ENCODE measurements at regions of chr2 and their contacts with region 1.

Region 1: DNA sequence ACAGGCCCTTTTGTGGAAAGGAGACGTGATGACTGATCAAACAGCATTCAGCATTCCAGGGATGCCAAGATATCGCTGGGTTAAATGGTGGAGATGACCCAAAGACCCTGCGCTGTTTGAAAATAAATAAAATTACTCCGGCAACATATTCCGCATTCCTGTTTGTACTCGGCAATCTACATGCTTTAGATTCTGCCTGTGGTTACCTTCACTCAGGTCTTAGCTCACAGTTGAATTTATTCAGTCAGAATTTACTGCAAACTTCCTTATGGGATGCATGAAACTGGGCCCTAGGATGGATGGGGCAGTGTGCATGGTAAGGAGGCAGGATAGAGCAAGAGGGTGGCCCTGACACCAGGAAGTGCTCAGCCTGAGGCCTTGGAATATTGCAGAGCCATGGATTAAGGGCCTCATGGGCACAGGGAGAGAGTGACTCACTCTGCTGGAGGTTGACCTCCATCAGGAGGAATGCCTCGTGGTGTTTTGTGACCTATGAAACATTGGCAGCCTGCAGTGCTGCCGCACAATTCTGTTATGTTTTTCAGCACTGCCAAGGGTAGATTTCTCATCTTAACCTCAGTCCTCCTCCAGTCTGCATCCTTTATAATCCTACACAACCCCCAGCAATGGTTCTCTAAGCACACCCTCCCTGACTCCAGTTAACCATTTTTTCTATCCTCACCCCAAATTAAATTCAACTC is 321.4 kb downstream of the IRS1 start:
- DNase-seq: peak; percentile 48 to 77
- H3K4me3 ChIP-seq: no peak overlapping the region
- H3K27ac ChIP-seq: no peak overlapping the region
- H3K4me1 ChIP-seq: peaks cover 24% of the 10 kb centered on the region
- H3K27me3 ChIP-seq: no peaks in the 10 kb centered on the region
- CTCF ChIP-seq: no peak

Region 2: GRCh38 chr2:225889446-225889850 is 588.8 kb before region 1 on chr2:
- CTCF ChIA-PET with region 1: no interaction called
- POLR2A ChIA-PET with region 1: no interaction called
- intact Hi-C with region 1: loop called (anchors 1 kb)
- DNase-seq: peak; percentile 2 to 58
- H3K4me3 ChIP-seq: no peak overlapping the region
- H3K27ac ChIP-seq: peak overlapping the region; percentile 48
- H3K4me1 ChIP-seq: peaks cover 8% of the 10 kb centered on the region; the same call in 1 of the 2 replicates
- H3K27me3 ChIP-seq: no peaks in the 10 kb centered on the region
- CTCF ChIP-seq: peak; percentile 88

Region 3: DNA sequence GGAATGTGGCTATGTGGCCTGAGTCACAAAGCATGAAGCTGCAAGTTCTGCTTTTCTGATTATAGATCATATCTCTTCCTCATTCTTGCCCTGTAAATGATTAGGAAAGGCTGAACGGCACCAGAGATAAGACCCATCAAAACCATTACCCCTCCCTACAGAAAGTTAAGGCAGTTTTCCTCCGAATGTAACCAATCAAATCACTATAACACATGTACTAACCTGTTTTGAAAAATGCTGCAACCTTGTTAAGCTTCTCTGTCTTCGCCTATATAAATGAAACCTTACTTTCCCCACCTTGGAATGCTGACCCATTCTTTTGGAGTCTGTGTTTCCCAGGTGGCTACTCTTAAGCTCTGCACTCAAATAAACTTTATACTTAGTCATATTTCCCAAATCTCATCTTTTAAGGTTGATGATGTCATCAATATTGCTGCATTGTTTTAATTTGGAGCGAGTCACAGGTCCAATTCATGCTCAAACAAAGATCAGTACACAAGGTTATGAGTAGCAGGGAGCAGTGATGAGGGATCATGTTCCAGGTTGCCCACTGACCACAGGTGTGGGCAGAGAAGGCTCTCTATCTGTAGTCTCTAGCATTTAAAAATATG is 341.0 kb before region 1 on chr2:
- CTCF ChIA-PET with region 1: no interaction called
- POLR2A ChIA-PET with region 1: no interaction called
- intact Hi-C with region 1: loop called (anchors 1 kb)
- DNase-seq: peak; percentile 21 to 72
- H3K4me3 ChIP-seq: no peak overlapping the region
- H3K27ac ChIP-seq: peak overlapping the region; percentile 58
- H3K4me1 ChIP-seq: peaks cover 23% of the 10 kb centered on the region
- H3K27me3 ChIP-seq: no peaks in the 10 kb centered on the region
- CTCF ChIP-seq: no peak

Region 4: GRCh38 chr2:226215902-226216503 is 262.3 kb before region 1 on chr2:
- CTCF ChIA-PET with region 1: no interaction called
- POLR2A ChIA-PET with region 1: no interaction called
- intact Hi-C with region 1: loop called (anchors 10 kb)
- DNase-seq: peak in 1 of 2 experiments; percentile 37
- H3K4me3 ChIP-seq: no peak overlapping the region
- H3K27ac ChIP-seq: no peak overlapping the region
- H3K4me1 ChIP-seq: no peaks in the 10 kb centered on the region
- H3K27me3 ChIP-seq: no peaks in the 10 kb centered on the region
- CTCF ChIP-seq: peak; percentile 63

Region 5: DNA sequence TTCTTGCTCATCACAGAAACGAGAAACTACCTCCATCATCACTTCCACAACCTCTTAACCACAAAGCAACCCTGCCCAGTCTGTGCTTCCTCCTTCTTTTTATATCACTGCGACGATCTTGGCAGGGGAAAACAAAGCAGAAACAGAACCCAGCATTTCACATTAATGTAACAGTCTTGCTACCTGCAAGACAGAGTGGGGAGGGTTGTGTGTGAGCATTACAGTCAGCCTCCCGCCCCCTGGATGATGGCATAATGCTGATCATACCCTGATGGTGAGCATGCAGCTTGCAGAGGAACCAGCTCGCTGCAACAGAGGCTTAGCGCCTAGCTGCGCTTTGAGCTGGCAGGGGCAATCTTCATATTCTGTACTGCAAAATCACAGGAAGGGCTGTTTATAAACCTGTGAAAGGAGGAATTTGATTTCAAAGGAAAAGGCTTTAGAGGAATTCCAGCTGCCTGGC is 54.7 kb before region 1 on chr2:
- CTCF ChIA-PET with region 1: interaction called, 3 read pairs
- POLR2A ChIA-PET with region 1: no interaction called
- intact Hi-C with region 1: loop called (anchors 2 kb)
- DNase-seq: peak in 1 of 2 experiments; percentile 41
- H3K4me3 ChIP-seq: no peak overlapping the region
- H3K27ac ChIP-seq: no peak overlapping the region
- H3K4me1 ChIP-seq: peaks cover 31% of the 10 kb centered on the region
- H3K27me3 ChIP-seq: no peaks in the 10 kb centered on the region
- CTCF ChIP-seq: no peak

Region 6: GRCh38 chr2:226649871-226650660 is 171.8 kb after region 1 on chr2:
- CTCF ChIA-PET with region 1: interaction called, 3 read pairs
- POLR2A ChIA-PET with region 1: interaction called, 4 read pairs
- intact Hi-C with region 1: loop called (anchors 1 kb)
- DNase-seq: peak; percentile 80 to 88
- H3K4me3 ChIP-seq: no peak overlapping the region
- H3K27ac ChIP-seq: peak overlapping the region; percentile 92
- H3K4me1 ChIP-seq: peaks cover 45% of the 10 kb centered on the region
- H3K27me3 ChIP-seq: no peaks in the 10 kb centered on the region
- CTCF ChIP-seq: no peak

Region 7: GRCh38 chr2:226799181-226799975 is 321.1 kb after region 1 on chr2 and contains the start of gene IRS1:
- CTCF ChIA-PET with region 1: interaction called, 10 read pairs
- POLR2A ChIA-PET with region 1: interaction called, 4 read pairs
- intact Hi-C with region 1: loop called (anchors 1 kb)
- DNase-seq: peak; percentile 57 to 76
- H3K4me3 ChIP-seq: peak within 1 kb of the TSS; percentile 95
- H3K27ac ChIP-seq: peak within 1 kb of the TSS; percentile 61
- H3K4me1 ChIP-seq: peaks cover 45% of the 10 kb centered on the region
- H3K27me3 ChIP-seq: no peaks in the 10 kb centered on the region
- CTCF ChIP-seq: no peak
- total RNA-seq, gene IRS1: 26.2 and 28.6 TPM in 2 replicates